ENCODE measurements at regions of chr9 and their contacts with region 1.

Region 1: GRCh38 chr9:89278997-89279739 is 31.8 kb upstream of the CKS2 start:
- DNase-seq: peak; percentile 21
- H3K4me3 ChIP-seq: no peak overlapping the region
- H3K27ac ChIP-seq: no peak overlapping the region
- H3K27me3 ChIP-seq: no peaks in the 10 kb centered on the region
- CTCF ChIP-seq: peak; percentile 69

Region 2: GRCh38 chr9:89293014-89293413 is 13.8 kb after region 1 on chr9:
- CTCF ChIA-PET with region 1: interaction called, 10 read pairs
- POLR2A ChIA-PET with region 1: no interaction called
- DNase-seq: no peak
- H3K4me3 ChIP-seq: no peak overlapping the region
- H3K27ac ChIP-seq: no peak overlapping the region
- H3K27me3 ChIP-seq: no peaks in the 10 kb centered on the region
- CTCF ChIP-seq: no peak

Measured in AG04450 (cell line).